ENCODE measurements at regions of chr13 and their contacts with region 1.

Region 1: DNA sequence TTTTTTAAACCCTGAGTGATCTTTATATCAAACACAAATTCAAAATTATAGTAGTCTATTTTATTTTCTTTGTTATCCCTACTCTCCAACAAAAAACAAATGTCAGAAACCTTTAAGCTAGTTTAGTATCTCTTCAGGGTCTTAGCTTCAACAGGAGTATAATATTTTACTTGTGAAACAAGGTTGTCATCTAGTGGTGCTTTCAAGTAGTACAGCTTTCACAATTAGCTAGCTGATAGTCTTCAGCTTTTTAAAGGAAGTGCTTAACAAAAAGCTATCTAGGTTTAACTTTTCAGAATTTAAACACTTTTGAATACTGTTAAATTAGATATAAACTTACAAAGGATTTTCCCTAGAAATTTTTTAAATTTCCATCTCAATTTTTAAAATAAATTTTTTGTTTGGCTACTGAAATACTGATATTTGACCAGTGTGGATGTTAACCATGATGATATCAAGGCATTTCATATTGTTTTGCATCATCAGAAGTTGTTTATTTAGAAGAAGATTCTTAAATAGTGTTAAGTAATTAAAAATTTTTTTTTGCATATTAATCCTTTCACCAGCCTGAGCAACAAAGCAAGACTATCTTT is 34.2 kb downstream of the TDRD3 start:
- DNase-seq: no peak
- ATAC-seq: peak in 3 of 4 donors; percentile 66 to 81 (median 77)
- H3K4me3 ChIP-seq: no peak overlapping the region
- H3K27ac ChIP-seq: no peak overlapping the region
- H3K4me1 ChIP-seq: no peaks in the 10 kb centered on the region
- H3K27me3 ChIP-seq: no peaks in the 10 kb centered on the region
- CTCF ChIP-seq: peak; percentile 88 to 97 (median 93)
- POLR2A ChIP-seq: no peak

Region 2: DNA sequence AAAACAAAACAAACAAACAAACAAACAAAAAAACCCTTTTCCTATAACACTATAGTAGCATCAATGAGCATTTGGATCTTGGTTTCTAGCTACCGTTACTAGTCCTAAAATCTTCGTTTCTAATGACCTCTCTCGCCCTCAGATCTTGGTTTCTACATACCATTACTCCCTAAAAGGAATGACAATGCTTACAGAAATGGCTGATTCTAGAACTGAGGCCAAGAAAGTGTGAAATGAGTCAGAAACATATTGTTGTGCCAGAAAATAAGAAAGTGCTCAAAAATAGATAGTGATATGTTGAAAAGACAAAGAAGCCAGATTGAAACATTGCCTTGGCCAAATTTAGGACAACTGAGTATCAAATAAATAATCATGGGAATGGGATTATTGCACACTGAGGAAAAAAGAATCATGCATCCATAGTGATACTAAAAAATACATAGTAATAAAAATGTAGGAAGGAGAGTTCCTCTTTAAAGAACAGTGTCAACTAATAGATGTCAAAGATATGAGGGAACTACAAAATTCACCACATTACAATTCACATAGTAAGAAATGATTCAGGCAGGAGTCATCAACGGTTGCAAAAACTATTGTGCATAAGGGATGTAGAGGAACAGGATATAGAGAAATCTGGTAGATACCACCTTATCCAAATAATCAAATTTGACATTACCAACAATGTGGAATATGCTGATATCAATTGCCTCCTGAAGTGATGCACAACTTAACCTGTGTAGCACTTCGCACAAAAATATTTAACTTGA is 654.1 kb before region 1 on chr13:
- intact Hi-C with region 1: loop called in 1 of 10 experiments (anchors 5 kb)
- DNase-seq: no peak
- ATAC-seq: no peak
- H3K4me3 ChIP-seq: no peak overlapping the region
- H3K27ac ChIP-seq: no peak overlapping the region
- H3K4me1 ChIP-seq: no peaks in the 10 kb centered on the region
- H3K27me3 ChIP-seq: no peaks in the 10 kb centered on the region
- CTCF ChIP-seq: no peak
- POLR2A ChIP-seq: no peak

Region 3: DNA sequence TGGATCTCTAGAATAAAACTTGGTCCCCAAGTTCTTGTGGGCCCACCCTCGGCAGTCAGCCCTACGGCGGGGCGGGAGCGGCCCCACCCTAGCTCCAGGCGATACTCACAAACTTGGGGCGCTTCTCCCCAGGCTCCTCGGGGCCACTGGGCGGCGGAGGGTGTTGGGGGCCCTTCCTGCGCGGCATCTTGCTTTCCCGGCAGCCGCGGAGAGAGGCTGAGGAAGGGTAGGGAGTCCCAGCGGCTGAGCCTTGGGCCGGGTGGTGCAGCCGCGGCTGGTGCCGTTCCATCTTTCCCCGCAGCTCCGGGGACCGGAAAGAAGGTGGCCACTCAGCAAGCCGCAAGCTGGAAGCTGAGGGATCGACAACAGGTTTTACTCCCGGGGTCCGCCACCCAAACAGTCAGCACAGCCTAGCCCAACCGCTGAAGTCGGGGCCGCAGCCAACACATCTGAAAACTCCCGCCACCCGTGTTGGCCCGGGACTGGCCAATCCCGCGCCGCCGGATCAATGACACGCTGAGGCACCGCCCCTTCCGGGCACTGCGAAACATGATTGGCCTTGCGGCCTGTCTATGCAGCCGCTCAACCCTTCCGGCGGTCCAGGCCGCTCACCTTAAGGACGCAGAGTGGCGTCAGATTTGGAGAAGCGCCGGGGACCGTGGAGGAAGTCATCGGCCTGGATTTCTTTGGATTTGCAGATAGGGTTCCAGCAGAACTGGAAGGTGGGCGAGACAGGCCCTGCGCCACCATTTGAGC is 267.5 kb before region 1 on chr13 and contains the start of gene DIAPH3:
- intact Hi-C with region 1: loop called in 2 of 10 experiments (anchors 10 kb)
- DNase-seq: peak; percentile 95 to 98 (median 96)
- ATAC-seq: peak; percentile 100
- H3K4me3 ChIP-seq: peak within 1 kb of the TSS; percentile 50 to 80 (median 69)
- H3K27ac ChIP-seq: peak within 1 kb of the TSS; percentile 82 to 94 (median 90)
- H3K4me1 ChIP-seq: peaks cover 0 to 21% (median 7%) of the 10 kb centered on the region in 12 donors
- H3K27me3 ChIP-seq: no peaks in the 10 kb centered on the region
- CTCF ChIP-seq: peak in 1 of 12 donors; percentile 20
- POLR2A ChIP-seq: peak; percentile 88 to 92
- total RNA-seq, gene DIAPH3: 0.09 to 3.2 (median 0.22) TPM

Region 4: DNA sequence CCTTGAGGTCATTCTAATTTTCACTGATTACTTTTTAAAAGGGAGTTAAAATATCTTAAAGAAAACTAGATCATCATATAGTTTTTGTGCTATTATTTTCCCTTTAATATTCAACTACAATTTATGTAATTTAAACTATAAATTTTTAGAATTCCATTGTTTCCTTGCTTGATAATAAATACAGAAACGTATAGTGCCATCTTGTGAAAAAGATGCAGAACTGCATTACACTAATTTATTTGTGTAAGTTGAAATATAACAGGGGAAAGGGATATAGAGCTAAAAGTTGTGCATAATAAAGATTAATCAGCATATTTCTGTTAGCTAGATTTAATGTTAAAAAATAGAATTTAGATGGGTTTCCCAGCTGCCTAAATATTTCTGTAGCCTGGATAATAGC is 95.7 kb before region 1 on chr13:
- intact Hi-C with region 1: loop called in 2 of 10 experiments (anchors 10 kb)
- DNase-seq: no peak
- ATAC-seq: no peak
- H3K4me3 ChIP-seq: no peak overlapping the region
- H3K27ac ChIP-seq: no peak overlapping the region
- H3K4me1 ChIP-seq: no peaks in the 10 kb centered on the region
- H3K27me3 ChIP-seq: peaks cover 0 to 8% (median 0%) of the 10 kb centered on the region in 9 donors
- CTCF ChIP-seq: peak; percentile 30 to 75 (median 55)
- POLR2A ChIP-seq: no peak

Region 5: DNA sequence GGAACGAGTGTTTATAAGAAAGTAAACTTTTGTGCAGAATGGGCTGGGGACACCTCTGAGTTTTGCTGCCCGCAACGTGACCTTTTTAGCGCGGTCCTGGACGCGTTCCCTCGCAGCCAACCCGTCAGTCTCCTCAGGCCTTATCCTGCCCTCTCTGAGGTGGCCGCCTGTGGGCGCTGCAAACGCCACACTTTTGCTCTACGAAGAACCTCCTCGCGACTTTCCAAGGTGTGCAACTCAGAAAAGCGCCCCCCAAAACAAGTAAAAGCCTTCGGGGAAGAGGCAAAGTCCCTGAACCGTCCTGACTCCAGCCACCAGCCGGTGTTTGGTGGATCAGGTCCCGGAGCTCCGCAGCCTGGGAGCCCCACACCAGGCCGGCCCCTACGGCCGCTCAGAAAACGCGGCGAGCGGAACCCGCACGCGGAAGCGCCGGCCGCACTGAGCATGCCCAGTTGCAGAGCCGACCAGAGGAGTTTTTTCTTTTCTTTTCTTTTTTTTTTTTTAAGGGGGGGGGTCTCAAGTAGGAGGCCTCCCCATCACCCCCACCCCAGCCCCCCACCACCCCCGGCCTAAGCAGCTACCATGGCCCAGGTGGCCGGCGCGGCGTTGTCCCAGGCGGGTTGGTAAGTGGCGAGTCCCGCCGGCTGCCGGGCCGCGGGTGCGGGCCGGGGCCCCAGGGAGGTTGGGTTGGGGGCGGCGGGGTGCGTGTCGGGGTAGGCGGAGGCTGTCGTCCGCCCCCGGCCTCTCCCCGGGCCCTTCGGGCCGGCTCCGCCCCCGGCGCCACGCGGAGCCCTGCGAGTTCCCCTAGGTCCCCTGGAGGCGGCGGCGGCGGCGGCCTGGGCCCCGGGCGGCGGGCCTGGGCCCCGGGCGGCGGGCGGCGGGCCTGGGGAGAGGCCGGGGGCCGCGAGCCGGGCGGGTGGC is 34.2 kb before region 1 on chr13 and contains the start of gene TDRD3:
- intact Hi-C with region 1: loop called in 3 of 10 experiments (anchors 5 kb)
- DNase-seq: peak; percentile 84 to 92 (median 89)
- ATAC-seq: peak; percentile 87 to 89 (median 88)
- H3K4me3 ChIP-seq: peak within 1 kb of the TSS; percentile 43 to 85 (median 74)
- H3K27ac ChIP-seq: peak within 1 kb of the TSS; percentile 91 to 100 (median 98)
- H3K4me1 ChIP-seq: peaks cover 6 to 37% (median 20%) of the 10 kb centered on the region in 12 donors
- H3K27me3 ChIP-seq: no peaks in the 10 kb centered on the region
- CTCF ChIP-seq: peak; percentile 57 to 94 (median 74)
- POLR2A ChIP-seq: peak in 1 of 2 donors; percentile 43
- total RNA-seq, gene TDRD3: 17.1 to 56.4 (median 42.1) TPM

Region 6: DNA sequence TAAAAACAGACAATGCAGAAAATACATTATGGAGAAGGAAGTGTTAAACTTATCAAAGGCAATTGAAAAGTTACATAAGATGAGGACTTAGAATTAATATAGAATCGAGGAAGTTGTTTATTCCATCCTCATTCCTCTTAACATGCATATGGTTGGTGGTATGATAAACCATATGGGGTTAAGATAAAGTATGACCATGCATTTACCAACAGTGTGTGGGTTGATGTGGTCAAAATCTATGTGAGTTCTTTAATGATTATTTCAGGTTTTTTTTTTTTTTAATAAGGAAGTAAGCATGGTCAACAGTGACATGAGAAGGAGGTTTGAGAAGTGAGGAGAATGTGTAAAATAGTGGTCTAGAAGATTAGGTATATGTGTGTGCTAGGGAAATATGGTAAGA is 60.3 kb after region 1 on chr13:
- intact Hi-C with region 1: no loop called
- DNase-seq: no peak
- ATAC-seq: no peak
- H3K4me3 ChIP-seq: no peak overlapping the region
- H3K27ac ChIP-seq: no peak overlapping the region
- H3K4me1 ChIP-seq: no peaks in the 10 kb centered on the region
- H3K27me3 ChIP-seq: no peaks in the 10 kb centered on the region
- CTCF ChIP-seq: no peak
- POLR2A ChIP-seq: no peak

Measured in heart left ventricle (tissue), 16 donors.